ENCODE measurements at regions of chr20 and their contacts with region 1.

Region 1: DNA sequence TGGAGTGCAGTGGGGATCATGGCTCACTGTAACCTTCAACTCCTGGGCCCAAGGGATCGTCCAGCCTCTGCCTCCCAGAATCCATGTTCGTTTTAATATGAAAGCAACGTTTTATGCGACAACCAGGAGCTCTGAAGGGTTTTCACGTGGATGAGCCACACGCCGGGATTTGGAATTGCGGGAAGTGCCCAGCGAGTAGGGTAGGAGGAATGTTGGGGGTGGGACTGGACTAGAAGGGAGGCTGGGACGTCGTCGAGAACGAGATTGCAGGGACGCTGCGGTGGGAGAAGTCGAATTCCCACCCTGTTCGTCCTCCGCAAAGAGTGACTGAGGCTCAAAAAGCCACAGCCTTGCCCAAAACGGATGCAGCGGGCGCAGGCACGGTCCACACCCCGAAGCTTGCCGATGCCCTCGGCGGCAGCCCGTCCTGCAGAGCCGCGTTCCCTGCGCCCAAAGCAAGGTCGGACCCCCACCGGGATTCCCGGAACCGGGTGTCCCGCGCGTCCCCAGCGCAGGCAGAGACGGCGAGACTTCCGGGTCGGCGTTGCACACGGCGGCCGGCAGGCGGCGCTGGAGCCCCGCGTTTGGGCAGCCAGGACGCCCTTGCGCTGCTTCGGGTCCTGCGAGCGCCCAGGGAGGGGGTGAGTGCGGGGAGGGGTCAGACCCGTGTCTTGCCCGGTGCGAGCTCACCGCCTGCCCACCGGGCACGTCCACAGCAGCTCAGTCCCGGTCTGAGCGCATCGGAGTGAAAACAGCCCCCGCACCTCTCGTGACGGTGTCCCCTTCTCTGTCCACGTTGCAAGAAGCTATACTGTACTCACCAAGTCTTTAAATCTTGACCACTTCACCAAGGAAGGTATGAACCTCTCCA is 87.8 kb downstream of the DHX35 start:
- DNase-seq: peak; percentile 64
- H3K4me3 Mint-ChIP-seq: peak overlapping the region; percentile 78
- H3K27ac Mint-ChIP-seq: no peak overlapping the region
- H3K4me1 Mint-ChIP-seq: peaks cover 5% of the 10 kb centered on the region
- H3K27me3 Mint-ChIP-seq: peaks cover 15% of the 10 kb centered on the region
- CTCF ChIP-seq: peak; percentile 96

Region 2: GRCh38 chr20:38645980-38646858 is 403.7 kb before region 1 on chr20:
- CTCF ChIA-PET with region 1: interaction called, 143 read pairs
- POLR2A ChIA-PET with region 1: no interaction called
- intact Hi-C with region 1: loop called (anchors 1 kb)
- DNase-seq: peak; percentile 74
- H3K4me3 Mint-ChIP-seq: peak overlapping the region; percentile 60
- H3K27ac Mint-ChIP-seq: no peak overlapping the region
- H3K4me1 Mint-ChIP-seq: peaks cover 9% of the 10 kb centered on the region
- H3K27me3 Mint-ChIP-seq: peaks cover 42% of the 10 kb centered on the region
- CTCF ChIP-seq: peak; percentile 96

Region 3: GRCh38 chr20:38883081-38883980 is 166.6 kb before region 1 on chr20:
- CTCF ChIA-PET with region 1: interaction called, 11 read pairs
- POLR2A ChIA-PET with region 1: no interaction called
- intact Hi-C with region 1: no loop called
- DNase-seq: peak; percentile 43
- H3K4me3 Mint-ChIP-seq: no peak overlapping the region
- H3K27ac Mint-ChIP-seq: no peak overlapping the region
- H3K4me1 Mint-ChIP-seq: peaks cover 10% of the 10 kb centered on the region
- H3K27me3 Mint-ChIP-seq: no peaks in the 10 kb centered on the region
- CTCF ChIP-seq: no peak

Region 4: DNA sequence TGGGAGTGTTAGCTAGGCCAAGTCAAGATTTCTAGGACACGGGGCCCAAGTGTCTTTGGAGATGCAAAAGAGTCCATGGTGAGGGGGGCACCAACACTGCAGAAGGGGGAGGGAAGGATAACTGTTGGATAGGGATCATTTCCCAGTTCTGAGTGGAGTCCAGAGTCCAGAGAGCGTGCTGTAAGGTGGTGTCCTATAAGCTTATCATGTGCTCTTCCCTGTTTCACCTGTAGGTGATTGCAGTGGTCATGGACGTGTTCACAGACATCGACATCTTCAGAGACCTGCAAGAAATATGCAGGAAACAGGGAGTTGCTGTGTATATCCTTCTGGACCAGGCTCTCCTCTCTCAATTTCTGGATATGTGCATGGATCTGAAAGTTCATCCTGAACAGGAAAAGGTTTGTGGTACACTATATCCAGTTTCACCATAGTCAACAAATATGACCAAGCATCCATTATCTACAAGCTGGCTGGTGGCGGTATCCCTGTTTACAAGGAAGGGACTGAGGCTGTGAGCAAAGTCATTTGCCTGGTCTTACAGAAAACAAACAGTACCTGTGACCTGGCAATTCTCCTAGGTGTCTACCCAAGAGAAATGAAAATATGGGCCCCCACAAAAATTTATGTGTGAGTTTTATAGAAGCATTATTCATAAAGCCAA is 108.1 kb before region 1 on chr20:
- CTCF ChIA-PET with region 1: interaction called, 13 read pairs
- POLR2A ChIA-PET with region 1: no interaction called
- intact Hi-C with region 1: no loop called
- DNase-seq: no peak
- H3K4me3 Mint-ChIP-seq: no peak overlapping the region
- H3K27ac Mint-ChIP-seq: peak overlapping the region; percentile 55
- H3K4me1 Mint-ChIP-seq: peaks cover 11% of the 10 kb centered on the region
- H3K27me3 Mint-ChIP-seq: no peaks in the 10 kb centered on the region
- CTCF ChIP-seq: no peak

Region 5: DNA sequence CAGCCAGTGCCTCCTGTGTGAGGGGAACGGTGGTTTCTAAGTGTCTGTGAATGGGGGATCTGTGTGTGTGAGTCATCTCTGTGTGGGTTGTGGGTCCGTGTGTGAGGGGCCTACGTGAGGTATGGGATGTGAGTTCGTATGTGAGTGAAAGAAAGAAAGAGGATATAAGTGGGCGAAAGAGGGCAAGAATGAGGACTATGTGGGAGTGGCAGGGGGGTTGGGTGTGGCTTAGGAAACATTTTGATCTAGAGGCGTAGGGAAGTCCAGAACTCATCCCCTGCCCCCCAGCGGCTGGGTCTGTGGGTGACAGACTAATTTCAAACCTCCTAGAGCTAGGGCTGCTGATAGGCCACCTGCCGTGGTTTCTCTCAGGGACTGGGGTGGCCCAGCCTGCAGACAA is 52.3 kb before region 1 on chr20:
- CTCF ChIA-PET with region 1: interaction called, 11 read pairs
- POLR2A ChIA-PET with region 1: no interaction called
- intact Hi-C with region 1: no loop called
- DNase-seq: no peak
- H3K4me3 Mint-ChIP-seq: no peak overlapping the region
- H3K27ac Mint-ChIP-seq: no peak overlapping the region
- H3K4me1 Mint-ChIP-seq: peaks cover 5% of the 10 kb centered on the region
- H3K27me3 Mint-ChIP-seq: no peaks in the 10 kb centered on the region
- CTCF ChIP-seq: no peak

Region 6: GRCh38 chr20:39036011-39036410 is 13.9 kb before region 1 on chr20:
- CTCF ChIA-PET with region 1: interaction called, 80 read pairs
- POLR2A ChIA-PET with region 1: interaction called, 5 read pairs
- intact Hi-C with region 1: no loop called
- DNase-seq: no peak
- H3K4me3 Mint-ChIP-seq: no peak overlapping the region
- H3K27ac Mint-ChIP-seq: no peak overlapping the region
- H3K4me1 Mint-ChIP-seq: no peaks in the 10 kb centered on the region
- H3K27me3 Mint-ChIP-seq: no peaks in the 10 kb centered on the region
- CTCF ChIP-seq: no peak

Region 7: GRCh38 chr20:39105549-39105948 is 55.6 kb after region 1 on chr20:
- CTCF ChIA-PET with region 1: interaction called, 23 read pairs
- POLR2A ChIA-PET with region 1: no interaction called
- intact Hi-C with region 1: no loop called
- DNase-seq: no peak
- H3K4me3 Mint-ChIP-seq: no peak overlapping the region
- H3K27ac Mint-ChIP-seq: no peak overlapping the region
- H3K4me1 Mint-ChIP-seq: no peaks in the 10 kb centered on the region
- H3K27me3 Mint-ChIP-seq: peaks cover 39% of the 10 kb centered on the region
- CTCF ChIP-seq: peak; percentile 12

Measured in MCF 10A (cell line).